PC-3 (cell line): ENCODE measurements at regions of chr6 and their contacts with region 1.

Region 1: DNA sequence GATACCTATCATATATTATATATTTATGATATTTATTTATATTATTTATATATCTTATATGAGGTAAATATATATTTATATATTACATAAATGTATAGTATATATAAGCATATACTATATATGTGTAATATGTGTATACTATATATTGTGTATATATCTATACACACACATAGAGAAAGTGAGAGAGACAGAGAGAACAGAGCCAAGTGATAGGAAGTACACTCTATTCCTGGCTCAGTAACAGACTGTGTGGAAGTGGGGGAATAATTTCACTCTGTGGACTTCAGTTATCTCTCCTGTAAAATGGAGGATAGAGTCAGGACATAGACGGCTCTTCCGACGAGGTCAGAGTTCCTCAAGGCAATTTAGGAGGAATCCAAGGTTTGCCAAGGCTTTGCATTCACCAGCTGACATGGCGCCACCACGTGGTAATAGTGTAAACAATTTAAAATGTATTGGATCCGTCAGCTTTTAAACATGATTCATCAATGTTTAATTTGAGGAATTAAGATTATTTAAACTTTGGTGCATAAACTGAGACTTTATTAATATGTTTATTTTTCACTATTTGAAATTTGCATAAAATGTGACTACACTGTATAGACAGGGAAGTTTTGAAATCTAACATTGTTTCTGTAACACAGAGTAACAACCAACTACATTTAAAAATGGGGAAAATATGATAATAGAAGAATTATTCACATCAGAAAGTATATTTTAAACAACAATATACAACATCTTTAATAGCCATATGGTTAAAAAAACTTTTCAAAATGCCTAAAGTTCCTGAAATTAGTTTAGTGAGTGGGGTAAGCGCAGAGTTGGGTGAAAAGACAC is 75.4 kb upstream of the TMEM244 start:
- DNase-seq: peak; percentile 77
- ATAC-seq: peak; percentile 49
- H3K4me3 ChIP-seq: no peak overlapping the region; the same call in 1 of the 2 replicates
- H3K27ac ChIP-seq: no peak overlapping the region
- H3K4me1 ChIP-seq: peaks cover 25% of the 10 kb centered on the region
- H3K27me3 ChIP-seq: no peaks in the 10 kb centered on the region
- CTCF ChIP-seq: peak; percentile 71

Region 2: GRCh38 chr6:129490521-129491245 is 445.9 kb before region 1 on chr6:
- CTCF ChIA-PET with region 1: no interaction called
- POLR2A ChIA-PET with region 1: no interaction called
- intact Hi-C with region 1: loop called (anchors 5 kb)
- DNase-seq: peak; percentile 95
- ATAC-seq: peak; percentile 82
- H3K4me3 ChIP-seq: peak overlapping the region; percentile 68
- H3K27ac ChIP-seq: peak overlapping the region; percentile 100
- H3K4me1 ChIP-seq: peaks cover 56% of the 10 kb centered on the region
- H3K27me3 ChIP-seq: no peaks in the 10 kb centered on the region
- CTCF ChIP-seq: no peak

Region 3: GRCh38 chr6:129774697-129775447 is 161.7 kb before region 1 on chr6:
- CTCF ChIA-PET with region 1: no interaction called
- POLR2A ChIA-PET with region 1: no interaction called
- intact Hi-C with region 1: loop called (anchors 5 kb)
- DNase-seq: peak; percentile 81
- ATAC-seq: peak; percentile 67
- H3K4me3 ChIP-seq: peak overlapping the region; percentile 23; the same call in 1 of the 2 replicates
- H3K27ac ChIP-seq: no peak overlapping the region
- H3K4me1 ChIP-seq: no peaks in the 10 kb centered on the region
- H3K27me3 ChIP-seq: no peaks in the 10 kb centered on the region
- CTCF ChIP-seq: peak; percentile 90

Region 4: DNA sequence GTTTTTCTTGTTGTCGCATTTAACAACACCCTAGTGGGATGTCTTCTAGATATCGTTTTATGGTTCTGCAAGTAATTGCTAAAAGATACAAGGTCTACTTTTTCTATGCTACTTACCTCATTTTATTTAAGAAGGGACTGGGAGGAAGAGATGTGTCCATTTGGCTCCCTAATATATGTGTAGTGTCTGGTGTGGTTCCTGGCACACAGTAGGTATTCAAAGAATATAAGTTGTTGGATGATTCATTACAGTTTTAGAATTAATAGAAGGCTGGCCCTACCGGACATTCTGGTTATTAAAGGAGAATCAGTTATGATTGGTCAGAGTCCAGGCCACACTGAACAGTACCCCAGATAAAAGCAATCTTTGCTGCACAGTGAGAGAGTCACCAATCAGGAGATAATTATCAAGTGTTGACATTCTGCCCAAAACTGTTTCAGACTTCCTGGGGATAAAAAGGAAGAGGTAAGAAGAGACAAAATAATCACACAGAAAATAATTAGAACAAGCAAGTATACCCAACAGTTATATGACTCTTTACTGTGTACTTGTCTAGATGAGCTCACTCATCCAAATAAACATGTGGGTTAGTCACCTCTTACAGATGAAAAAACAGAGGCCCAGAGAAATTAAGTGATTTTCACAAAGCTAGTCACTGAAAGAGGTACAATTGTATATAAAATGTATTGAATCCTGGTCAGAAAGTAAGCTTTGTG is 82.4 kb before region 1 on chr6:
- CTCF ChIA-PET with region 1: no interaction called
- POLR2A ChIA-PET with region 1: no interaction called
- intact Hi-C with region 1: loop called (anchors 5 kb)
- DNase-seq: peak; percentile 64
- ATAC-seq: peak; percentile 86
- H3K4me3 ChIP-seq: no peak overlapping the region
- H3K27ac ChIP-seq: peak overlapping the region; percentile 51
- H3K4me1 ChIP-seq: peaks cover 37% of the 10 kb centered on the region
- H3K27me3 ChIP-seq: no peaks in the 10 kb centered on the region
- CTCF ChIP-seq: no peak

Region 5: DNA sequence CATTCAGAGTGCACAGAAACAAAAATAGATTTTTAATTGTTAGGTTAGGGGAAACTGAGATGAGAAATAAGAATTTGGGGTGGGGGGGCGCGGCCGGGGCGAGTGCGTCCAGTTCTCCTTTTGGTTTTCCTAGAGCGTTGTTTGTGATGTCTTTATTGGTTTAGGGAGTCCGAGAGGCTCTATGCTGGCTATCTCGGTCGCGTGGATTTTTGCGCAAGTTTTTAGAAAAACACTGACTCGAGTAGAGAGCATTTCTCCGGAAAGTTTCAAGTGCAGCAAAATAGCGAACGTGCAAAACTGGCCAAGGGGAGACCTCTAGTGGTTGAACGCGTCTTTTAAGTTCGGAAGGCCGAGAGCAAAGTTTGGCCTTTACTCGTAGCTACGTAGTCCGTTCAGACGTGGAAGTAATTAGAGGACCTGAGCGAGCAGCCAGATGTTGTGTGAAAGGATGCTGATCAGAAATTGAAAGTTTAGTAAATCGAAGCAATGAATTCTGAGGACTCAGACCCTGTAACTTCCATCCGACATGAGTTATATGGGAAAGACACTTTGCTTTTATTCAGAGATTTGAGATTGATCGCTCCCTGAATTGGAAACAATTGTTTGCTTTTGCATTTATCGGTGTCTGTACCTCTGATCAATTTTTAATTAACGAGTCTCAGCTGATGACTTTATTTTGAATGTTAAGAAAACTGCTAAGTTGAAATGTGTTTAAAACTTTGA is 84.5 kb after region 1 on chr6:
- CTCF ChIA-PET with region 1: interaction called, 4 read pairs
- POLR2A ChIA-PET with region 1: no interaction called
- intact Hi-C with region 1: loop called (anchors 2 kb)
- DNase-seq: peak; percentile 85
- ATAC-seq: peak; percentile 54
- H3K4me3 ChIP-seq: peak overlapping the region; percentile 75
- H3K27ac ChIP-seq: no peak overlapping the region
- H3K4me1 ChIP-seq: no peaks in the 10 kb centered on the region; the same call in 1 of the 2 replicates
- H3K27me3 ChIP-seq: no peaks in the 10 kb centered on the region
- CTCF ChIP-seq: peak; percentile 77